HepG2 (cell line): ENCODE measurements at regions of chr12 and their contacts with region 1.

Region 1: DNA sequence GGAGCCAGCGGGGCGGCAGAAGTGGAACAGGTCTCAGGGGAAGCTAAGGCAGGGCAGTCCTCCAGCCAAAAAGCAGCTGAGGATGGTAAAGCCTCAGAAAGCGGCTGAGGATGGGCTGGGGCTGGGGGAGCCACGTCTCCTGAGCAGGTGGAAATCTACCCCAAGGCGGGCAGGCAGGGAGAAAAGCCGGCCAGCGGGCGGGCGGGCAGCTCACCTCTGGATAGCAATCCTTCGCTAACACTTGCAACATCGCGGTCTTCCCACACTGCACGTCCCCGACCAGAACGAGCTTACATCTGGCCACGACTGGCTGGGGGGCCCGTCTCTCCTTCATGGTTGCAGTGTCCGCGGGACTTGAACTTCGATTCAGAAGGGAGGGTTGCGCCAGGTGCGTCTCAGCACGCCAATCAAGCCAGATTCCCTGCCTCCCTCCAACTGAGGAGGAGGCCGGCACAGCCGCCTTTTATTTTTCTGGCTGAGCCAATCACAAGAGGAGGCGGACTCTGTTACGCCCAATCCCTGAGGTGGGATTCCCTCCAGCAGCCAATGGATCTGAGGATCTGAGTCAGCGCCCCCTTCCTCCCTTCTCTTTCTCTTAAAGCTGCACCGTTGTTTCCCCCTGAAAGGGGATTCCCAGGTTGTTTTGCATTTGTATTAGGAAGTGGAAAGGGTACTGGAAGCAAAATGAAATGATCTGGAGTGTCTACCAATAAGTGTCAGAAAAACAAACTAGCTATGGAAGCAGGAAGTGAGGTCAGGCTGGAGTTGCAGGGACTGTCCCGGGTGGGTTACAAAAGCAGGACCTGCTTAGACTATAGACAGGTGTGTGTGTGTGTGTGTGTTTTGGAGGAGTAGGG is at the start of gene RND1:
- DNase-seq: peak; percentile 94
- ATAC-seq: peak; percentile 92
- H3K4me3 ChIP-seq: peak within 1 kb of the TSS; percentile 59 to 82 (median 76)
- H3K27ac ChIP-seq: peak within 1 kb of the TSS; percentile 46
- H3K4me1 ChIP-seq: peaks cover 39% of the 10 kb centered on the region
- H3K27me3 ChIP-seq: no peaks in the 10 kb centered on the region; a peak in 1 of 5 replicates
- CTCF ChIP-seq: 0 out of 2 replicates have a peak, but pooled peaks have one; percentile 2
- EP300 ChIP-seq: no peak
- POLR2A ChIP-seq: peak; percentile 99
- RAD21 ChIP-seq: no peak
- total RNA-seq, gene RND1: 1.8 and 2.2 TPM in 2 replicates

Region 2: GRCh38 chr12:48572326-48572725 is 293.3 kb before region 1 on chr12:
- CTCF ChIA-PET with region 1: no interaction called
- POLR2A ChIA-PET with region 1: no interaction called
- in situ Hi-C with region 1: no loop called
- intact Hi-C with region 1: no loop called
- DNase-seq: no peak
- ATAC-seq: no peak
- H3K4me3 ChIP-seq: no peak overlapping the region
- H3K27ac ChIP-seq: no peak overlapping the region
- H3K4me1 ChIP-seq: no peaks in the 10 kb centered on the region
- H3K27me3 ChIP-seq: peaks cover 2 to 10% of the 10 kb centered on the region in 2 experiments; a peak in 2 of 5 replicates
- CTCF ChIP-seq: no peak
- EP300 ChIP-seq: no peak
- POLR2A ChIP-seq: no peak
- RAD21 ChIP-seq: no peak

Region 3: GRCh38 chr12:48681738-48682532 is 183.7 kb before region 1 on chr12 and contains the start of gene KANSL2:
- CTCF ChIA-PET with region 1: no interaction called
- POLR2A ChIA-PET with region 1: no interaction called
- in situ Hi-C with region 1: no loop called
- intact Hi-C with region 1: no loop called
- DNase-seq: peak; percentile 98
- ATAC-seq: peak; percentile 97
- H3K4me3 ChIP-seq: peak within 1 kb of the TSS; percentile 82 to 91 (median 85)
- H3K27ac ChIP-seq: peak within 1 kb of the TSS; percentile 93
- H3K4me1 ChIP-seq: peaks cover 39% of the 10 kb centered on the region
- H3K27me3 ChIP-seq: no peaks in the 10 kb centered on the region; a peak in 1 of 5 replicates
- CTCF ChIP-seq: peak; percentile 32
- EP300 ChIP-seq: peak in 1 of 2 experiments; percentile 1; a peak in 1 of 4 replicates
- POLR2A ChIP-seq: peak; percentile 99
- RAD21 ChIP-seq: peak; percentile 8; the same call in 1 of the 2 replicates
- total RNA-seq, gene KANSL2: 40.1 and 41.3 TPM in 2 replicates

Region 4: DNA sequence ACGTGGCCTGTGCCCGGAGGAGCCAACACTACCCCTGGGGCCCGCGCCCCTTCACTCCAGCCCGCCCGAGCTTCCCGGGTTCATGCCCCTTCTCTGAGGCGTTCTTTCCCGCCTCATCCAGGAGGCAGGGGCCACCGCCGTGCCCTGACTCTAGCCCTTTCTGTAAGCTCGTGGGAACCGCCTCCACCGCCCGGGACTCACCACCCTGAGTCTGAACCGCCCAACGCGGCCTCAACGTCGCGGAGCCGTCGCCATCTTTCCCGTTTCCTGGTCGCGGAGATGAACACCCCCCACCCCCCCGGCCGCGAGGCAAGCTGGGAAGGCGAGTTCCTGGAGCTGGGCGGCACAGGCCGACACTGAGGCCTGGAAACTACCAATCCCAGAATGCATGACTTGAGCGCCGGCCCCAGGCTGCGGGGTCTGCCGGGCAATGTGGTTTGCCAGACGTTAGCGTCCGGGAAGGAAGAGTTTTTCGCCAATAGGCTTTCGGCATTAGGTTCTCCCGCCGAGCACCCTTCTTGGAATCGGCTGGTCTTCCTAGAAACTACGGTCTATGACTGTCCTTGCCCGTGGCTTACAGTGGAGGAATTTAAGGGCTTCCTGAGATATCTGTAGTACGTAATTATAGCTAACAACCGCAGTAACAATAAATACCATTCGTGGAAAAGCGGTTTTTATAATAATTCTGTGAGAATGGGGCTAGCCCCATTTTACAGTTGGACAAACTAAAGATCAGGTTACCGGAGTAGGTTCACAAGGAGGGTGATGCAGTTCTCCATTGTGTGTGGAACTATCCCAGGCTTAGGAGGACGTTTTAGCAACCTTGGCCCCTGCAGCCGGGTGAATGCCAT is 13.6 kb before region 1 on chr12 and contains the start of gene DDX23:
- CTCF ChIA-PET with region 1: no interaction called
- POLR2A ChIA-PET with region 1: interaction called, 115 read pairs
- in situ Hi-C with region 1: no loop called
- intact Hi-C with region 1: loop called (anchors 1 kb)
- DNase-seq: peak; percentile 92
- ATAC-seq: peak; percentile 99
- H3K4me3 ChIP-seq: peak within 1 kb of the TSS; percentile 96 to 98 (median 98)
- H3K27ac ChIP-seq: peak within 1 kb of the TSS; percentile 75
- H3K4me1 ChIP-seq: peaks cover 18% of the 10 kb centered on the region
- H3K27me3 ChIP-seq: no peaks in the 10 kb centered on the region; a peak in 2 of 5 replicates
- CTCF ChIP-seq: no peak
- EP300 ChIP-seq: peak; percentile 20 to 39; a peak in 2 of 4 replicates
- POLR2A ChIP-seq: peak; percentile 65 to 77
- RAD21 ChIP-seq: 0 out of 2 replicates have a peak, but pooled peaks have one; percentile 9
- total RNA-seq, gene DDX23: 81.5 and 90.0 TPM in 2 replicates

Region 5: DNA sequence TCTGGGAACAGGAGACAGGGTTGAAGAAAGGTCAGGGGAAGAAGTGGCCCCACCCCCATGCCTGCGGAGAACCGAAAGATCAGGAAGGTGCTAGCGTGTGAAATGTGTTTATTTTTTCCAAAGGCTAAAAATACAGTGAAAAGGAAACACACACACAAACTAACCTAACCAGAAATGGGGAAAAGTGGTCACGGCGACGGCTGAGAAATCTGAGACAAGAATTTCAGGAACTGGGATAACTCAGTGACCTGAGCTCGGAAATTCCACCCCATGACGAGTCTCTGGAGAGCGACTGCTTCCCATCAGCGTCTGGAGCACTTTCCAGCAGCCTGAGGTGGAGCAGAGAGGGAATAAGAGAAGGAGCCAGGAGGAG is 16.6 kb after region 1 on chr12:
- CTCF ChIA-PET with region 1: no interaction called
- POLR2A ChIA-PET with region 1: interaction called, 52 read pairs
- in situ Hi-C with region 1: no loop called
- intact Hi-C with region 1: loop called (anchors 2 kb)
- DNase-seq: no peak
- ATAC-seq: no peak
- H3K4me3 ChIP-seq: peak overlapping the region in 1 of 3 experiments; percentile 24; a peak in 2 of 6 replicates
- H3K27ac ChIP-seq: no peak overlapping the region
- H3K4me1 ChIP-seq: peaks cover 95% of the 10 kb centered on the region
- H3K27me3 ChIP-seq: peaks cover 2 to 19% of the 10 kb centered on the region in 2 experiments; a peak in 3 of 5 replicates
- CTCF ChIP-seq: no peak
- EP300 ChIP-seq: no peak
- POLR2A ChIP-seq: no peak
- RAD21 ChIP-seq: no peak

Region 6: DNA sequence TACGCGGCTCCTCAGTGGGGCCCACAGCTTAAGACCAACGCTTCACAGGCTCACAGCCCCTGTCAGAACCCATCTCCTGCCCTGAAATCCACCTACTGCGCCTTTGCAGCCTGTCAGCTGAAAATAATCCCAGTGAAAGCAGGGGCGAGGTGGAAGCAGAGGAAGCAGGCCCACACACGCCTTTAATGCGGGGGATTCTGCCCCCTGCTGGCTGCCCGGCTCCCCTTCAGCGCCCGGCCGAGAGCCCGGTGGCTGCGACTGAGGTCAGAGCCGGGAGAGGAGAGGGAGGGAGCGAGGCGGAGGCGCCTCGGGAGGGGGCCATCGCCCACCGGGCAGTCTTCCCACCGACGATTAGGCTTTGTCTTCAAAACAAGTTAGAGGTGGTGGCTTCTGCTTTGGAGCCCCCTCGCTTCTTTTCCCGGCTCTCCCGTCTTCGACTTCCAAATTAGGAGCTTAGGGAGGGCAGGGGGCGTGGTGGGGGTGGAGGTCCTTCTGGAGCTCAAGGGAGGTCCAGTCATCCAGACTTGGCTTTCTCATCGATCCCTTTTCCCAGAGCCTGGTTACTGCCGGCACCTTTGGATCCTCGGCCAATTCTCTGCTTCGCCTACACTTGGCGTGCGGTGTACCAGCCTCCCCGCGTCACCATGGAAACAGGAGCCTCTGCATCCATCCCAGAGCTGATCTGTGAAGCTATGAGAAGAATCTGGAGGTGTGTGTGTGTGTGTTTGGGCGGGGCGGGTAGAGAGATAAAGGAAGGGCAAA is 25.2 kb after region 1 on chr12:
- CTCF ChIA-PET with region 1: no interaction called
- POLR2A ChIA-PET with region 1: interaction called, 33 read pairs
- in situ Hi-C with region 1: no loop called
- intact Hi-C with region 1: no loop called
- DNase-seq: peak; percentile 48
- ATAC-seq: peak; percentile 97
- H3K4me3 ChIP-seq: peak overlapping the region in 1 of 3 experiments; percentile 34; a peak in 1 of 6 replicates
- H3K27ac ChIP-seq: no peak overlapping the region
- H3K4me1 ChIP-seq: peaks cover 33% of the 10 kb centered on the region
- H3K27me3 ChIP-seq: peaks cover 1 to 10% of the 10 kb centered on the region in 2 experiments; a peak in 3 of 5 replicates
- CTCF ChIP-seq: peak; percentile 97
- EP300 ChIP-seq: no peak
- POLR2A ChIP-seq: no peak
- RAD21 ChIP-seq: peak; percentile 96

Region 7: DNA sequence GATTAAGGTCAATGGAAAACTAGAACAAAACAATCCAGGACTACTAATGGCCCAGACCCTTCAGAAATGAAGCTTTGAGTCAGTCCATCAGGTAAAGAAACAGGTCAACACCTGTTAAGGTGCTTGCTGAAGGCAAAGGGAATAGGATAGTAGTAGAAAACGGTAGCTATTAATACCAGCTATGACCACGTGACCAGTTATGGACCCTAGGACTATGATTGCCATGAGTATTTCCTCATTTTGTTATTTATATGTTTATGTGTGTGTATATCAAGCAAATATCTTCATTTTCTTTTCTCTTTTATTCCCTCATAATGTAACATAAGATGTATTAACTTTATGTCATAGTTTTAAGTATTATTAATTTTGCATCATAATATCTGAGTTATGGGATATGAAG is 34.0 kb after region 1 on chr12:
- CTCF ChIA-PET with region 1: no interaction called
- POLR2A ChIA-PET with region 1: interaction called, 16 read pairs
- in situ Hi-C with region 1: no loop called
- intact Hi-C with region 1: no loop called
- DNase-seq: no peak
- ATAC-seq: no peak
- H3K4me3 ChIP-seq: no peak overlapping the region
- H3K27ac ChIP-seq: no peak overlapping the region
- H3K4me1 ChIP-seq: peaks cover 44% of the 10 kb centered on the region
- H3K27me3 ChIP-seq: no peaks in the 10 kb centered on the region
- CTCF ChIP-seq: no peak
- EP300 ChIP-seq: no peak
- POLR2A ChIP-seq: no peak
- RAD21 ChIP-seq: no peak

Region 8: GRCh38 chr12:48910196-48910595 is 44.5 kb after region 1 on chr12:
- CTCF ChIA-PET with region 1: no interaction called
- POLR2A ChIA-PET with region 1: interaction called, 11 read pairs
- in situ Hi-C with region 1: no loop called
- intact Hi-C with region 1: no loop called
- DNase-seq: peak; percentile 96
- ATAC-seq: peak; percentile 92
- H3K4me3 ChIP-seq: peak overlapping the region in 1 of 3 experiments; percentile 24; a peak in 1 of 6 replicates
- H3K27ac ChIP-seq: peak overlapping the region; percentile 11
- H3K4me1 ChIP-seq: peaks cover 74% of the 10 kb centered on the region
- H3K27me3 ChIP-seq: no peaks in the 10 kb centered on the region
- CTCF ChIP-seq: no peak
- EP300 ChIP-seq: peak; percentile 31 to 92; a peak in 2 of 4 replicates
- POLR2A ChIP-seq: no peak
- RAD21 ChIP-seq: no peak